ENCODE measurements at regions of chr10 and their contacts with region 1.

Region 1: GRCh38 chr10:63133056-63133820 is at the start of gene NRBF2:
- DNase-seq: peak; percentile 98
- H3K4me3 Mint-ChIP-seq: peak within 1 kb of the TSS; percentile 89
- H3K27ac Mint-ChIP-seq: peak within 1 kb of the TSS; percentile 91
- H3K4me1 Mint-ChIP-seq: peaks cover 32% of the 10 kb centered on the region
- H3K27me3 Mint-ChIP-seq: peaks cover 3% of the 10 kb centered on the region
- total RNA-seq, gene NRBF2: 21.3 to 21.7 TPM

Region 2: GRCh38 chr10:62422068-62422590 is 711.1 kb before region 1 on chr10:
- CTCF ChIA-PET with region 1: no interaction called
- POLR2A ChIA-PET with region 1: no interaction called
- intact Hi-C with region 1: loop called (anchors 1 kb)
- DNase-seq: no peak
- H3K4me3 Mint-ChIP-seq: no peak overlapping the region
- H3K27ac Mint-ChIP-seq: no peak overlapping the region
- H3K4me1 Mint-ChIP-seq: peaks cover 29% of the 10 kb centered on the region
- H3K27me3 Mint-ChIP-seq: peaks cover 2% of the 10 kb centered on the region

Region 3: GRCh38 chr10:62732841-62733653 is 400.2 kb before region 1 on chr10:
- CTCF ChIA-PET with region 1: no interaction called
- POLR2A ChIA-PET with region 1: no interaction called
- intact Hi-C with region 1: loop called (anchors 5 kb)
- DNase-seq: peak; percentile 71
- H3K4me3 Mint-ChIP-seq: no peak overlapping the region
- H3K27ac Mint-ChIP-seq: no peak overlapping the region
- H3K4me1 Mint-ChIP-seq: peaks cover 19% of the 10 kb centered on the region
- H3K27me3 Mint-ChIP-seq: peaks cover 3% of the 10 kb centered on the region

Region 4: DNA sequence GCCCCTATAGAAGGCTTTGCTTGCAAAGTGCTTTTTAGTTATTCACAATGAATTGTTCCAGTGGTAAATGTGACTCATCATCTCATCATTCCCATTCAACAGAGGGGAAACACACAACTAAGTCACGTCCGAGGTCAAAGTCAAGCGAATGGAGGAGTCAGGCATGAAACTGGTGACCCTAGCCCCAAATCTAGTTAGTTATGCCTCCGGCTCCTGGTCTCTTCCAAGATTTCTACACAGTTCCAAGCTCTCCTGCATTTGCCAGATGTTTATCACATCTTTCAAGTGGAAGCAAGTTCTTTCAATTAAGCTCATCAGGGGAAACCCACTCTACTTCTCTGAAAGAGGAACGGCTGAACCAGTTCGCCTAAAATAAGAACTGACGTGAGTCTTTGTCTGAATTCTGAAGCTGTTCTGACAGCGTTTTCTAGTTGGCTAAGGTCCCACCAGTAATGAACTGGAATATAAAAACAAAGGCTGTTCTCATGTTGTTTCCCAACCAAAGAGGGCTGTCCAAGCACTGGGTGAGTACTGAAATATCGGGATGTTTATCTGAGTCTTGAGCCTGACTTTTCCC is 141.0 kb before region 1 on chr10:
- CTCF ChIA-PET with region 1: no interaction called
- POLR2A ChIA-PET with region 1: no interaction called
- intact Hi-C with region 1: loop called (anchors 2 kb)
- DNase-seq: peak; percentile 20
- H3K4me3 Mint-ChIP-seq: peak overlapping the region; percentile 24
- H3K27ac Mint-ChIP-seq: peak overlapping the region; percentile 84
- H3K4me1 Mint-ChIP-seq: peaks cover 54% of the 10 kb centered on the region
- H3K27me3 Mint-ChIP-seq: peaks cover 7% of the 10 kb centered on the region

Region 5: GRCh38 chr10:63145782-63146181 is 12.5 kb after region 1 on chr10:
- CTCF ChIA-PET with region 1: interaction called, 12 read pairs
- POLR2A ChIA-PET with region 1: interaction called, 8 read pairs
- intact Hi-C with region 1: no loop called
- DNase-seq: no peak
- H3K4me3 Mint-ChIP-seq: no peak overlapping the region
- H3K27ac Mint-ChIP-seq: peak overlapping the region; percentile 38
- H3K4me1 Mint-ChIP-seq: peaks cover 44% of the 10 kb centered on the region
- H3K27me3 Mint-ChIP-seq: no peaks in the 10 kb centered on the region

Region 6: GRCh38 chr10:63521416-63522276 is 388.4 kb after region 1 on chr10:
- CTCF ChIA-PET with region 1: no interaction called
- POLR2A ChIA-PET with region 1: no interaction called
- intact Hi-C with region 1: loop called (anchors 1 kb)
- DNase-seq: peak; percentile 64
- H3K4me3 Mint-ChIP-seq: peak overlapping the region; percentile 87
- H3K27ac Mint-ChIP-seq: peak overlapping the region; percentile 92
- H3K4me1 Mint-ChIP-seq: peaks cover 63% of the 10 kb centered on the region
- H3K27me3 Mint-ChIP-seq: no peaks in the 10 kb centered on the region

Region 7: GRCh38 chr10:63707254-63707910 is 574.1 kb after region 1 on chr10:
- CTCF ChIA-PET with region 1: no interaction called
- POLR2A ChIA-PET with region 1: no interaction called
- intact Hi-C with region 1: loop called (anchors 1 kb)
- DNase-seq: peak; percentile 48
- H3K4me3 Mint-ChIP-seq: no peak overlapping the region
- H3K27ac Mint-ChIP-seq: peak overlapping the region; percentile 20
- H3K4me1 Mint-ChIP-seq: peaks cover 12% of the 10 kb centered on the region
- H3K27me3 Mint-ChIP-seq: no peaks in the 10 kb centered on the region